ENCODE measurements at regions of chr15 and their contacts with region 1.

Region 1: DNA sequence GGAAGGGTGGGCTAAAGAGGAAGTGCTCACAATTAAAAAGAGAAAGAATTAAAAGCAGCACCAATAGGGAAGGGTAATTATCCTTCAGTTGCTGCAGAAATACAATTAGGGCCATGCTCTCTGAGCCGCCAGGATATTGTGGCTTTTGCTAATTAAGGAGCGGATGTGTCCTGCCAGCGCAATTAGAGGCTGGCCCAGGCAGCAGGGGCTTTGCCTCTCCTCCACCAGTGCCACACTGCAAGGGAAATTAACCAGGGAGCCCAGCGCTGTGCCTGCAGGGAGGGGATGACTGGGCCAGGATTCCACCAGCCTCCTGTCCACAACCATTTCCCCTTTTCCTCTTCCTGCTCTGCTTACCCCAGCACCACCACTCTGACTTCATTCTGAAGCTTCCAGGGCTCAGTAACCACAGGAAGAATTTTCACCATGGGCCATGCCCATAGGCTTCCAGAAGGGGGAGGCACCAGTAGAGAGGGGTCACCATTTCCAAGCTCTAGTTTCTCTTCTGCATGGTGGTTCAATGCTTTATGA is 10.4 kb upstream of the AEN start:
- DNase-seq: no peak
- H3K4me3 ChIP-seq: no peak overlapping the region
- H3K27ac ChIP-seq: no peak overlapping the region
- H3K4me1 ChIP-seq: 0 out of 2 replicates have a peak, but pooled peaks cover 4% of the 10 kb centered on the region
- H3K27me3 ChIP-seq: peaks cover 17% of the 10 kb centered on the region

Region 2: DNA sequence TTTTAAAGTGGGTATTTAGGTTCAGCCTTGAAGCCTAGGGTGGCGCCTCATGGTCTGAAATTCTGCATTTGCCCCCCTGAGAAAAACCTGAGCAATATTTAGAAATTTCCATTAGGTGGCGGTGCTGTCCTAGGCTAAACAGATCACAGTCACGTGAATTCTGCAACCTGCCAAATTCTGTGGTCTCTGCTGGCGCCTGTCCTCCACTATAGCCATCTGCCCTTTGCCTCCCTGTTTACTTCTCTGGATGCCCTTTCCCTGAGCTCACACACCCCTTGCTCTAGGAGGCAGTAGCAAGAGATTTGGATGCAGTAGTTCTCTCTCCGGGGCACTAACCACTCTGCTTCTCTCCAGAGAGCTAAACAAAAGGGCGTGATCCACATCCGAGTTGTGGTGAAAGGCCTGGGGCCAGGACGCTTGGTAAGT is 134.1 kb before region 1 on chr15:
- in situ Hi-C with region 1: loop called (anchors 10 kb)
- DNase-seq: peak; percentile 65
- H3K4me3 ChIP-seq: no peak overlapping the region
- H3K27ac ChIP-seq: no peak overlapping the region
- H3K4me1 ChIP-seq: no peaks in the 10 kb centered on the region
- H3K27me3 ChIP-seq: no peaks in the 10 kb centered on the region